ENCODE measurements at regions of chr5 and their contacts with region 1.

Region 1: GRCh38 chr5:98773464-98774191 is at the start of gene RGMB:
- DNase-seq: peak; percentile 87 to 95 (median 89)
- H3K4me3 ChIP-seq: peak within 1 kb of the TSS; percentile 71 to 73
- H3K4me3 Mint-ChIP-seq: peak within 1 kb of the TSS; percentile 94 to 99 (median 98)
- H3K27ac ChIP-seq: peak within 1 kb of the TSS; percentile 59
- H3K27ac Mint-ChIP-seq: peak within 1 kb of the TSS; percentile 89 to 98 (median 94)
- H3K4me1 ChIP-seq: peaks cover 48% of the 10 kb centered on the region
- H3K4me1 Mint-ChIP-seq: peaks cover 34 to 70% (median 50%) of the 10 kb centered on the region in 4 donors
- H3K27me3 ChIP-seq: peaks cover 5% of the 10 kb centered on the region
- H3K27me3 Mint-ChIP-seq: peaks cover 2 to 3% of the 10 kb centered on the region in 2 donors
- total RNA-seq, gene RGMB: 16.5 to 17.0 TPM

Region 2: DNA sequence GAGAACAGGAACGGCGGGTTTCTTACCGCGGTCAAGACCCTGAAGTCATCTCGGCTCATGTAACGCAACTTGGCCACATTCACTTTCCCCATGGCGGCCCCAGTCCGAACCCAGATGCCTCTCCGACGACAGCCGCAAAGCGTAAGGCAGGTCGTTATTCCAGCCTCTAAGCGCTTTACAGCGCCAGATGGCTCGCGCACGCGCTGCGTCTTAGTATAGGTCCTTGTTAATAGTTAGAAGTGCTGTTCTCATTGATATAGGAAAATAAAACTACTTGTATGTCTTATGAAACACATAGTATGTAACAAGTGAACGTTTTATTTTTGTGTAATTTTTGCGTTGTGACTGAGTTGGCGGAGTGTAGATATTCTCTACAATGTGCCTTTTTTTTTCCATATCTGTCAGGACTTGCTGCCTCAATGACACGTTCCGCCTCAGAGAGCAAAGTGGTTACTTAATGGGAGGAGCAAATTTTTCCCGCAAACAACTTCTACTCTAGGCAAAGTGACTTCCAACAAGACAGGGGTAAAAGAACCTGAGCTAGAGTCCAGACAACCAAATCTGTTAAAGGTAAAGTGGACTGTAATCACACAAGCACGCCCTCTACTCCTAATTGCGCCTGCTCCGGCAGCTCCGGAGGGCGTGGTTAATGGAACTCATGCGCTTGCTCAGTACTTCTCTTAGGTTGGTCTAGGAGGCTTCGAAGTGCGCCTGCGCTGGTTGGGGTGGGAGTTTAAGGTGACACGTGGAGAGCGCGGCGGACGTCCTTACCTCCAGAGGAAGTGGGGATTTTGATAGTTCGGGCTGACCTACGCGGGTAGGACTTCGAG is 1590.3 kb before region 1 on chr5 and contains the start of gene RIOK2:
- CTCF ChIA-PET with region 1: interaction called, 6 read pairs
- POLR2A ChIA-PET with region 1: interaction called, 5 read pairs
- intact Hi-C with region 1: loop called (anchors 1 kb)
- DNase-seq: peak; percentile 91 to 94 (median 92)
- H3K4me3 ChIP-seq: peak within 1 kb of the TSS; percentile 77 to 87
- H3K4me3 Mint-ChIP-seq: peak within 1 kb of the TSS; percentile 94 to 99 (median 97)
- H3K27ac ChIP-seq: peak within 1 kb of the TSS; percentile 95
- H3K27ac Mint-ChIP-seq: peak within 1 kb of the TSS; percentile 99 to 100 (median 100)
- H3K4me1 ChIP-seq: peaks cover 29% of the 10 kb centered on the region
- H3K4me1 Mint-ChIP-seq: peaks cover 23 to 50% (median 38%) of the 10 kb centered on the region in 4 donors
- H3K27me3 ChIP-seq: no peaks in the 10 kb centered on the region
- H3K27me3 Mint-ChIP-seq: no peaks in the 10 kb centered on the region
- total RNA-seq, gene RIOK2: 38.2 to 40.8 TPM

Region 3: DNA sequence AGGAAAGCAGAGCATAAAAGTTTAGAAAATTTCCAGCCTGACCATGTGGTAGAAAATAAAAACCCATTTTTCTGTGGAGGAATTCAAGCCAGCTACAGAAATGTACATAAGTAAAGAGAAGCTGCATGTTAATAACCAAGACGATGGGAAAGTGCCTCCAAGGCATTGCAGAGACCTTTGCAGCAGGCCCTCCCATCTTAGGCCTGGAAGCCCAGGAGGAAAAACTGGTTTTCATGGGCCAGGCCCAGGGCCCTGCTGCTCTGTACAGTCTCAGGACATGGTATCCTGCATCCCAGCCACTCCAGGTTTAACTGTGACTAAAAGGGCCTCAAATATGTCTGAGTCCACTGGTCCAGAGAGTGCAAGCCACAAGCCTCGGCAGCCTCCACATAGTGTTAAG is 835.8 kb before region 1 on chr5:
- CTCF ChIA-PET with region 1: no interaction called
- POLR2A ChIA-PET with region 1: no interaction called
- intact Hi-C with region 1: no loop called
- DNase-seq: no peak
- H3K4me3 ChIP-seq: no peak overlapping the region
- H3K4me3 Mint-ChIP-seq: no peak overlapping the region
- H3K27ac ChIP-seq: no peak overlapping the region
- H3K27ac Mint-ChIP-seq: no peak overlapping the region
- H3K4me1 ChIP-seq: no peaks in the 10 kb centered on the region
- H3K4me1 Mint-ChIP-seq: no peaks in the 10 kb centered on the region
- H3K27me3 ChIP-seq: no peaks in the 10 kb centered on the region
- H3K27me3 Mint-ChIP-seq: no peaks in the 10 kb centered on the region

Region 4: GRCh38 chr5:98231089-98231488 is 542.5 kb before region 1 on chr5:
- CTCF ChIA-PET with region 1: no interaction called
- POLR2A ChIA-PET with region 1: no interaction called
- intact Hi-C with region 1: no loop called
- DNase-seq: no peak
- H3K4me3 ChIP-seq: no peak overlapping the region
- H3K4me3 Mint-ChIP-seq: no peak overlapping the region
- H3K27ac ChIP-seq: no peak overlapping the region
- H3K27ac Mint-ChIP-seq: no peak overlapping the region
- H3K4me1 ChIP-seq: no peaks in the 10 kb centered on the region
- H3K4me1 Mint-ChIP-seq: no peaks in the 10 kb centered on the region
- H3K27me3 ChIP-seq: no peaks in the 10 kb centered on the region
- H3K27me3 Mint-ChIP-seq: no peaks in the 10 kb centered on the region

Region 5: DNA sequence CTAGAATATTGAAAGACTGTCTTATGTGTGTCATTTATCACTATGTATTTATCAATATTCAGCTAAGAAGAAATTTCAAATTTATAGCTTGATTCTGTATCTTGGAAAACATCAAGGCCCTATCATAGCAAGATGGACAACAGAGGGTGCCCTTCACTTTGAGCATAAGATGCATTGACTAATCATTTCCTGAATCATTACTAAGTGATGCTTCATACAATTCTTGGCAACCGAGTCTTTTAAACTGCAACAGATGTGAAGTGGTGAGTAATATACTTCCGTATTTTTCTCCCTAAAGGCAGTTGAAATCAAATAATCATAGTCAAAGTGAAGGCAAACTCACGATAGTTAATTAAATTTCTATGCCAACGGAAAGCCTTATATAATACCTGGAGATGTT is 318.7 kb before region 1 on chr5:
- CTCF ChIA-PET with region 1: no interaction called
- POLR2A ChIA-PET with region 1: no interaction called
- intact Hi-C with region 1: loop called (anchors 10 kb)
- DNase-seq: no peak
- H3K4me3 ChIP-seq: no peak overlapping the region
- H3K4me3 Mint-ChIP-seq: no peak overlapping the region
- H3K27ac ChIP-seq: no peak overlapping the region
- H3K27ac Mint-ChIP-seq: no peak overlapping the region
- H3K4me1 ChIP-seq: no peaks in the 10 kb centered on the region
- H3K4me1 Mint-ChIP-seq: no peaks in the 10 kb centered on the region
- H3K27me3 ChIP-seq: no peaks in the 10 kb centered on the region
- H3K27me3 Mint-ChIP-seq: no peaks in the 10 kb centered on the region

Region 6: GRCh38 chr5:98796197-98796972 is 22.8 kb after region 1 on chr5:
- CTCF ChIA-PET with region 1: interaction called, 97 read pairs
- POLR2A ChIA-PET with region 1: no interaction called
- intact Hi-C with region 1: loop called (anchors 1 kb)
- DNase-seq: peak; percentile 40 to 61 (median 56)
- H3K4me3 ChIP-seq: no peak overlapping the region
- H3K4me3 Mint-ChIP-seq: no peak overlapping the region
- H3K27ac ChIP-seq: no peak overlapping the region
- H3K27ac Mint-ChIP-seq: peak overlapping the region in 1 of 7 donors; percentile 62
- H3K4me1 ChIP-seq: no peaks in the 10 kb centered on the region
- H3K4me1 Mint-ChIP-seq: peaks cover 0 to 6% (median under 1%) of the 10 kb centered on the region in 4 donors
- H3K27me3 ChIP-seq: no peaks in the 10 kb centered on the region
- H3K27me3 Mint-ChIP-seq: no peaks in the 10 kb centered on the region

Region 7: DNA sequence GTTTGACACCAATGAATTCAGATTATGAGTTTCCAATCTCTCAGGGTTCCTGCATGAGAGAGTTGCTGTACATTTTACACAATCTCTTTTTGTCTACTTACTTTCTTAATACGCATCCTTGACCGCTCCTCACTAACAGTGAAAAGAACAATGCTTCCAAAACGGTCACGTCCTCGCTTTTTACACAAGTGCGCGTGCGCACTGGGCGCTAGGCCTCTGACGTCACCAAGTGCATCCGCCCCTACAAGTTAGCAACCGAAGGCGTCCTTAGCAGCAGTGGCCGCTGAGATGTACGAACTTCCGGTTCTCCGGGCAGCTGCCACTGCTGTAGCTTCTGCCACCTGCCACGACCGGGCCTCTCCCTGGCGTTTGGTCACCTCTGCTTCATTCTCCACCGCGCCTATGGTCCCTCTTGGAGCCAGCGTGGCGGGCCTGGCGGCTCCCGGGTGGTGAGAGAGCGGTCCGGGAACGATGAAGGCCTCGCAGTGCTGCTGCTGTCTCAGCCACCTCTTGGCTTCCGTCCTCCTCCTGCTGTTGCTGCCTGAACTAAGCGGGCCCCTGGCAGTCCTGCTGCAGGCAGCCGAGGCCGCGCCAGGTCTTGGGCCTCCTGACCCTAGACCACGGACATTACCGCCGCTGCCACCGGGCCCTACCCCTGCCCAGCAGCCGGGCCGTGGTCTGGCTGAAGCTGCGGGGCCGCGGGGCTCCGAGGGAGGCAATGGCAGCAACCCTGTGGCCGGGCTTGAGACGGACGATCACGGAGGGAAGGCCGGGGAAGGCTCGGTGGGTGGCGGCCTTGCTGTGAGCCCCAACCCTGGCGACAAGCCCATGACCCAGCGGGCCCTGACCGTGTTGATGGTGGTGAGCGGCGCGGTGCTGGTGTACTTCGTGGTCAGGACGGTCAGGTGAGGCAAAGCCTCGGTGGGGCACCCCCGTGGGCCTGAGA is 1761.7 kb after region 1 on chr5 and contains the start of gene FAM174A:
- CTCF ChIA-PET with region 1: no interaction called
- POLR2A ChIA-PET with region 1: no interaction called
- intact Hi-C with region 1: loop called (anchors 5 kb)
- DNase-seq: peak; percentile 92 to 96 (median 95)
- H3K4me3 ChIP-seq: peak within 1 kb of the TSS; percentile 68 to 81
- H3K4me3 Mint-ChIP-seq: peak within 1 kb of the TSS; percentile 93 to 100 (median 97)
- H3K27ac ChIP-seq: peak within 1 kb of the TSS; percentile 89
- H3K27ac Mint-ChIP-seq: peak within 1 kb of the TSS; percentile 92 to 99 (median 98)
- H3K4me1 ChIP-seq: peaks cover 24% of the 10 kb centered on the region
- H3K4me1 Mint-ChIP-seq: peaks cover 23 to 33% (median 26%) of the 10 kb centered on the region in 4 donors
- H3K27me3 ChIP-seq: no peaks in the 10 kb centered on the region
- H3K27me3 Mint-ChIP-seq: peaks cover 0 to under 1% of the 10 kb centered on the region in 2 donors
- total RNA-seq, gene FAM174A: 5.1 to 6.7 TPM